OCI-LY7 (cell line): ENCODE measurements at regions of chr16 and their contacts with region 1.

Region 1: GRCh38 chr16:54140057-54140787 is 146.4 kb downstream of the IRX3 start:
- DNase-seq: no peak
- H3K4me3 ChIP-seq: no peak overlapping the region
- H3K27ac ChIP-seq: no peak overlapping the region
- H3K4me1 ChIP-seq: no peaks in the 10 kb centered on the region
- CTCF ChIP-seq: no peak

Region 2: DNA sequence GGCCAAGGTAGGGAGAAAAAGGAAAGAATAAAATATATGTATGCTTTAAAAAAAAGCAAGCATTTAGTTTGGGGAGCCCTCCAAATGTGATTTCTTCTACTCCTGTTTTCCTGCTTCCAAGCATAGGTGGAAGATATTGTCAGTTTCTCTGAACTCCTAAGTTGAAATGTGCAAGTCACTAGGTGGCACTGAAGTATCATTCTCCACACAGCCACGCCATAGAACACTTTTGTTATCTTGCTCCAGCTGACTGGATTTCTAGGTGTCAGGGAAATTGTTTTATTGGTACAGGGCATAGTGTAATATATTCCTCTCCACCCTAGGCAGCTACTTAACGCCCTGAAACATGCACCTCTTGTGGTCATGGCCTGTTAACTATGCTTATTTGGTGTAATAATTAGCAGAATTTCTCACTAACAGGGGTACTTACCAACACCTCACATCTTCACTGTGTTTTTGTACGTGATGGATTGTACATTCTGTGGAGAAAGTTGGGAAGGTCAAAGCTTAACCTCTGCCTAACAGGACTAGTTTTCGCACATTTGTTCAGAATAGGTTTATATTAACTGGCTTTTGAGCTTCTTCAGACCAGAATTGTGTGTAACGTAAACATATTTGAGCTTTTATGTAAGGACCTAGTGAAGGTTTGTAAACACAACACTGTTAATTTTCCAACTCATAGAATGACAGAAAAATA is 366.9 kb before region 1 on chr16:
- CTCF ChIA-PET with region 1: no interaction called
- POLR2A ChIA-PET with region 1: interaction called, 11 read pairs
- intact Hi-C with region 1: no loop called
- DNase-seq: peak; percentile 16
- H3K4me3 ChIP-seq: no peak overlapping the region
- H3K27ac ChIP-seq: no peak overlapping the region
- H3K4me1 ChIP-seq: peaks cover 11% of the 10 kb centered on the region
- CTCF ChIP-seq: peak; percentile 71

Region 3: GRCh38 chr16:54165174-54165911 is 25.1 kb after region 1 on chr16:
- CTCF ChIA-PET with region 1: no interaction called
- POLR2A ChIA-PET with region 1: no interaction called
- intact Hi-C with region 1: no loop called
- DNase-seq: no peak
- H3K4me3 ChIP-seq: no peak overlapping the region
- H3K27ac ChIP-seq: no peak overlapping the region
- H3K4me1 ChIP-seq: no peaks in the 10 kb centered on the region
- CTCF ChIP-seq: no peak

Region 4: GRCh38 chr16:54602666-54603065 is 462.4 kb after region 1 on chr16:
- CTCF ChIA-PET with region 1: interaction called, 10 read pairs
- POLR2A ChIA-PET with region 1: no interaction called
- intact Hi-C with region 1: no loop called
- DNase-seq: no peak
- H3K4me3 ChIP-seq: no peak overlapping the region
- H3K27ac ChIP-seq: no peak overlapping the region
- H3K4me1 ChIP-seq: no peaks in the 10 kb centered on the region
- CTCF ChIP-seq: no peak